Activated CD4-positive, alpha-beta T cell treated with anti-CD3 and anti-CD28 coated beads, Interleukin-2, amount 10 ng/mL, durations not matched to agents 24 days and 14 days (primary cell): ENCODE measurements at regions of chrX and their contacts with region 1.

Region 1: GRCh38 chrX:124217304-124218251 is 114.9 kb upstream of the TEX13D start:
- DNase-seq: peak; percentile 89
- H3K4me3 Mint-ChIP-seq: peak overlapping the region; percentile 73
- H3K27ac Mint-ChIP-seq: peak overlapping the region; percentile 97
- H3K4me1 Mint-ChIP-seq: peaks cover 70% of the 10 kb centered on the region
- H3K27me3 Mint-ChIP-seq: no peaks in the 10 kb centered on the region

Region 2: DNA sequence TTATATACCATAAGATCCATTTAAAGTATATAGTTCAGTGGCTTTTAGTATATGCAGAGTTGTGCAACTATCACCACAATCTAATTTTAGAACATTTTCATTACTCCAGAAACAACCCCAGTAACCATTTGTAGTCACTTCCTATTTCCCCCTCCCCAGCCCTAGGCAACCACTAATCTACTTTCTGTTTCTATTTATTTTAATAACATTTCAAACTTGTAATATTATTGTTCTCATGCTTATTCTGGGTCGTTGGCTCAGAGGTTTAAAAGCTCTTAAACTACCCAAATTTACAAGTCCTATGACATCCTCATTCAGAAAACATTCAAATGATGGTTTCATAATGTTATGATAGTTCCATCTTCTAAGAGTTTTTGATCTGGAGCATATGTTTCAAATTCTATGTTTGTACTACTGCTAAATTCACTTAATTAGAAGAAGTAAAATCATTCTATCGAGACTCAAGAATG is 339.3 kb before region 1 on chrX:
- intact Hi-C with region 1: loop called (anchors 5 kb)
- DNase-seq: peak; percentile 60
- H3K4me3 Mint-ChIP-seq: peak overlapping the region; percentile 57
- H3K27ac Mint-ChIP-seq: peak overlapping the region; percentile 80
- H3K4me1 Mint-ChIP-seq: peaks cover 16% of the 10 kb centered on the region
- H3K27me3 Mint-ChIP-seq: no peaks in the 10 kb centered on the region

Region 3: DNA sequence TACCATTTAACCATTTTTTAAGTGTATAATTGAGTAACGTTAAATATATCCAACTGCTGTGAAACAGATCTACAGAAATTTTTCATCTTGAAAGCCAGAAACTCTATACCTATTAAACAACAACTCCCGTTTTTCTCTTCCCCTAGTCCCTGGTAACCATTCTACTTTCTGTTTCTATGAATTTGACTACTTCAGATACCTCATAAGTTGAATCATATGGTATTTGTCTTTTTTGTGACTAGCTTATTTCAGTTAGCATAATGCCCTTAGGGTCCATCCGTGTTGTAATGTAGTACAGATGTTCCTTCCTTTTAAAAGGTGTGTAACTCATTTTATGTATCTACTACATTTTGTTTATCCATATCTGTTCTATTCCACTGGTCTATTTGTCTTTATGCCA is 207.4 kb before region 1 on chrX:
- intact Hi-C with region 1: no loop called
- DNase-seq: no peak
- H3K4me3 Mint-ChIP-seq: peak overlapping the region; percentile 4
- H3K27ac Mint-ChIP-seq: peak overlapping the region; percentile 5
- H3K4me1 Mint-ChIP-seq: peaks cover 28% of the 10 kb centered on the region
- H3K27me3 Mint-ChIP-seq: no peaks in the 10 kb centered on the region

Region 4: GRCh38 chrX:124086411-124086810 is 131.2 kb before region 1 on chrX:
- intact Hi-C with region 1: loop called (anchors 5 kb)
- DNase-seq: peak; percentile 82
- H3K4me3 Mint-ChIP-seq: peak overlapping the region; percentile 37
- H3K27ac Mint-ChIP-seq: peak overlapping the region; percentile 86
- H3K4me1 Mint-ChIP-seq: peaks cover 25% of the 10 kb centered on the region
- H3K27me3 Mint-ChIP-seq: no peaks in the 10 kb centered on the region

Region 5: DNA sequence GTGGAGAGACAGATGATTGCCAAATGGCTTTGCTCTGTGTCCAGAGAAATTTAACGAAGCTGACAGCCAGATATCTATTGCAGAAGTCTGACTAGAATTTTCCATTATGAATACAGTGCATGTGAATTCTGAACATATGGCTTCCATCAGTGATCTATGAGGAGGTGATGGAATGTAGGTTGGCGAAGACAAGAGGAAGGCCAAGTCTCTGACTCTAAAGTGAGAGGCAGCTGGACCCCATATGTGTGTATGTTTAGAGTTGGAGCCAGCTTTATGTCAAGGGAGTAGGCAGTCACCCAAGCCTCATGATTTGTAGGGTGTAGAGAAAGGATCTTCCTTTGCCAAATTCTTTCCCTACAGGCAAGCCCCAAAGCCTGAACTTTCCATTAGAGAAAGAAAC is 38.6 kb after region 1 on chrX:
- intact Hi-C with region 1: loop called (anchors 5 kb)
- DNase-seq: no peak
- H3K4me3 Mint-ChIP-seq: no peak overlapping the region
- H3K27ac Mint-ChIP-seq: no peak overlapping the region
- H3K4me1 Mint-ChIP-seq: peaks cover 15% of the 10 kb centered on the region
- H3K27me3 Mint-ChIP-seq: no peaks in the 10 kb centered on the region

Region 6: GRCh38 chrX:124300405-124300804 is 82.8 kb after region 1 on chrX:
- intact Hi-C with region 1: loop called (anchors 5 kb)
- DNase-seq: peak; percentile 50
- H3K4me3 Mint-ChIP-seq: no peak overlapping the region
- H3K27ac Mint-ChIP-seq: peak overlapping the region; percentile 65
- H3K4me1 Mint-ChIP-seq: peaks cover 14% of the 10 kb centered on the region
- H3K27me3 Mint-ChIP-seq: no peaks in the 10 kb centered on the region